ENCODE measurements at regions of chr19 and their contacts with region 1.

Region 1: DNA sequence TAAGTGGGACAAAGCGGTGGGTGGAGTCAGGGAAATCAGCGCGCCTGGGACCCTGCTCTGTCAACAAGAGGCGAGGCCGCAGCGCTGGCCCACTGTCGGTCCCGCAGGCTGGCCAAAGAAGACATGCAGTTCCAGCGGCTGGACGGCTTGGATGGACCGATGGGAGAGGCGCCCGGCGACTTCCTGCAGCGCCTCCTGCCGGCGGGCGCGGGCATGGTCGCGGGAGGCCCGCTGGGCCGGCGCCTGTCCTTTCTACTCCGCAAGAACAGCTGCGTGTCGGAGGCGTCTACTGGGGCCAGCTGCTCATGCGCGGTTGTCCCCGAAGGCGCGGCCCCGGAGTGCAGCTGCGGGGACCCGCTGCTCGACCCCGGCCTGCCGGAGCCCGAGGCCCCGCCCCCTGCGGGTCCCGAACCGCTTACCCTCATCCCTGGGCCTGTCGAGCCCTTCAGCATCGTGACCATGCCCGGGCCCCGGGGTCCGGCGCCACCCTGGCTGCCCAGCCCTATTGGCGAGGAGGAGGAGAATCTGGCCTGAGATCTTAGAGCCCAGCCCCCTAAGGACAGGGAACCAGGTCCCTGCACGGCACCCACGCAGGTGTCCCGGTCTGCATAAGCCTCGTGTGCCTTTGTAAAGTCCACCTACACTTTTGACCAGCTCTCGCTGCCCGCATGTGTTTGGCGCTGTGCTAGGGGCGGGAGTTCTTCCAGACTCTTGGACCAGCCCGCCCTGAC is 6.1 kb downstream of the BEST2 start:
- DNase-seq: peak; percentile 76 to 81 (median 79)
- ATAC-seq: peak; percentile 96
- H3K4me3 ChIP-seq: no peak overlapping the region
- H3K4me1 ChIP-seq: peaks cover 7% of the 10 kb centered on the region
- CTCF ChIP-seq: peak; percentile 92

Region 2: DNA sequence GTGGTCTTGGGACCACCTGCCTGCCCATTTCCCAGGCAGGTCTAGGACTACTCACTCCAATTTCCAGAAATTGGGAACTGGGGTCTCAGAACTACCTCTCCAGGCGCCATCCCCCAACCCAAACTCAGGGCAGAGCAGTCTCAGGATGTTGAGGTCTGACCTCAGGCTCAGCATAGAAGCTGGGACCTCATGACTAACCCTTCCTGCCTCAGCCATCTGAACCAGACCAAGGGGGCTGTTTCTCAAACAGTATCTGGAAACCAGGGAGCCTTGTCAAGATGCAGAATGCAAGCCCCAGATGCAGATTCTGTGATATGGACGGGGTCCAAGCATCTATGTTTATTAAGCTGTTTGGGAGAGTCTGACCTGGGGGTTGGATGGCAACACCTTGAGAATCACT is 62.6 kb before region 1 on chr19:
- intact Hi-C with region 1: no loop called
- DNase-seq: no peak
- ATAC-seq: no peak
- H3K4me3 ChIP-seq: no peak overlapping the region
- H3K4me1 ChIP-seq: peaks cover 12% of the 10 kb centered on the region
- CTCF ChIP-seq: no peak

Region 3: GRCh38 chr19:12705654-12706331 is 51.9 kb before region 1 on chr19:
- intact Hi-C with region 1: loop called in 1 of 2 experiments (anchors 5 kb)
- DNase-seq: no peak
- ATAC-seq: no peak
- H3K4me3 ChIP-seq: no peak overlapping the region
- H3K4me1 ChIP-seq: no peaks in the 10 kb centered on the region
- CTCF ChIP-seq: no peak

Region 4: GRCh38 chr19:12806239-12807081 is 48.8 kb after region 1 on chr19 and contains the start of gene RNASEH2A:
- intact Hi-C with region 1: no loop called
- DNase-seq: peak; percentile 93
- ATAC-seq: peak; percentile 87
- H3K4me3 ChIP-seq: peak within 1 kb of the TSS; percentile 20
- H3K4me1 ChIP-seq: peaks cover 8% of the 10 kb centered on the region
- CTCF ChIP-seq: no peak
- total RNA-seq, gene RNASEH2A: 5.5 to 12.4 (median 6.5) TPM